Heart left ventricle (tissue), 16 donors: ENCODE measurements at regions of chr16 and their contacts with region 1.

Region 1: GRCh38 chr16:51540259-51540658 is 389.2 kb upstream of the SALL1 start:
- DNase-seq: no peak
- ATAC-seq: no peak
- H3K4me3 ChIP-seq: no peak overlapping the region
- H3K27ac ChIP-seq: no peak overlapping the region
- H3K4me1 ChIP-seq: no peaks in the 10 kb centered on the region
- H3K27me3 ChIP-seq: peaks cover 0 to 3% (median 0%) of the 10 kb centered on the region in 9 donors
- CTCF ChIP-seq: no peak
- POLR2A ChIP-seq: no peak

Region 2: DNA sequence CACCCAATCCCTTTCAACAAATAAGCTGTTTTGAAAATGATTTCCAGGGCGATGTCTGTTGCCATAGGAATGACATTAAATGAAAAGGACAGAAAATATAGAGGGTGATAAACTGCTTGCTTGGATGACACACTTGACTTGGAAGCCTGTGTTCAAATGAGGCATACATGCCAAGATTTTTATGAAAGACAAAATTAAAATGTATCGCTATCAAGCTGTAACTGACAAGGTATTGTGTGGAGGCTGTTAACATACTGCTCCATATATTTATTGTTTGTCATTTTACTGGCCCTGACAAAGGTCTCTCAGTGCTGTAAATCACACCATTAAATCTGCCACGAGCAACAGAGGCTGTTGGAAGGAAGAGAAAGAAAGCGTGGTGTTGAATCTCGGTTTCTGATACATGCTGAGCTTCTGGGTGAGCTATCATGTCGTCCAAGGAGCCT is 67.0 kb after region 1 on chr16:
- intact Hi-C with region 1: loop called in 1 of 10 experiments (anchors 10 kb)
- DNase-seq: no peak
- ATAC-seq: no peak
- H3K4me3 ChIP-seq: no peak overlapping the region
- H3K27ac ChIP-seq: no peak overlapping the region
- H3K4me1 ChIP-seq: no peaks in the 10 kb centered on the region
- H3K27me3 ChIP-seq: no peaks in the 10 kb centered on the region
- CTCF ChIP-seq: no peak
- POLR2A ChIP-seq: no peak